Endothelial cell of umbilical vein (primary cell): ENCODE measurements at regions of chr20 and their contacts with region 1.

Region 1: DNA sequence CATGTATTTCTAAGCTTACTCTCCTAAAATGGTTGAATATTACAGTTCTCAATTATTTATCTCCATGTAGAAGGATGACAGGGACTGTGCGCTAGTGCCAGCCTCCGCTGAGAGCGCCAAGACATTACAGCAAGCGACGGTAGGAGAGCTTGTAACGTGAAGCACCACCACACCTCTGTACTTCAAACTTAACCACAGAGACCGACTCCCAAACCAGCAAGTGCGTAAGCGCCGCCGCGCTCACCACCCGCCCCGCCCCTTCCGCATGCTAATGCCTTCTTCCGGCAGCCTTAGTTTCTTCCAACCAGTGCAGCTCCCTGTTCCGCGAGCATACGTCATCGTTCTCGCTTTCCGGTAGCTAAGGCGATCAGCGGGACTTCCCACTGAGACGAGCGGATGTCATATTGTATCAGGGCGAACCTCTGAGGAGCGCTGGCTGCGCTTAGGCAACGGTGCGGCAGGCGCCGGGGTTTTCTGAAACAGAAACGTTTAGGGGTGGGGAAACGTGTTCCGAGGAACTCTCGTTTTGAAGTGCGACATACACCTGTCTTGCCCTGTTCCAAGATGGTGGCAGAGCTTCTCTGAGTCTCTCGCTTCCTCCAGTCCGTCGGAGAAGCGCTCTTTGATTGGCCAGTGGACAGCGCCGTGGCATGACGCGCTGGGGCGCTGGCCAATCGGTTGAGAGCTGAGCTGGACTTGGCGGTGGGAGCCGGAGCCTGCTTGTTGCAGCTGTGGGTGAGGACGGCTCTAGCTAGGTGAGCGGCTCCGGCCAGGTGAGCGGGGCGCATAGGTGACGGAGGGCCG is at the start of gene SEC23B:
- DNase-seq: peak; percentile 98
- H3K4me3 ChIP-seq: peak within 1 kb of the TSS; percentile 65 to 94 (median 75)
- H3K27ac ChIP-seq: peak within 1 kb of the TSS; percentile 82
- H3K4me1 ChIP-seq: peaks cover 9% of the 10 kb centered on the region
- H3K27me3 ChIP-seq: peaks cover 0 to 5% of the 10 kb centered on the region in 2 experiments
- CTCF ChIP-seq: no peak
- POLR2A ChIP-seq: peak; percentile 87
- total RNA-seq, gene SEC23B: 38.0 and 42.5 TPM in 2 replicates

Region 2: GRCh38 chr20:18287915-18288748 is 219.3 kb before region 1 on chr20 and contains the start of gene ZNF133:
- CTCF ChIA-PET with region 1: no interaction called
- POLR2A ChIA-PET with region 1: no interaction called
- dilution Hi-C with region 1: no loop called
- intact Hi-C with region 1: loop called (anchors 1 kb)
- DNase-seq: peak; percentile 96
- H3K4me3 ChIP-seq: peak within 1 kb of the TSS; percentile 72 to 92 (median 79)
- H3K27ac ChIP-seq: peak within 1 kb of the TSS; percentile 92
- H3K4me1 ChIP-seq: peaks cover 7% of the 10 kb centered on the region
- H3K27me3 ChIP-seq: peaks cover 0 to 8% of the 10 kb centered on the region in 2 experiments
- CTCF ChIP-seq: peak in 1 of 2 donors; percentile 7
- POLR2A ChIP-seq: peak; percentile 90
- total RNA-seq, gene ZNF133: 11.1 and 12.2 TPM in 2 replicates

Region 3: GRCh38 chr20:18466894-18467730 is 40.3 kb before region 1 on chr20 and contains the starts of genes DZANK1 and POLR3F:
- CTCF ChIA-PET with region 1: interaction called, 3 read pairs
- POLR2A ChIA-PET with region 1: interaction called, 8 read pairs
- dilution Hi-C with region 1: no loop called
- intact Hi-C with region 1: loop called (anchors 1 kb)
- DNase-seq: peak; percentile 96
- H3K4me3 ChIP-seq: peak within 1 kb of the TSS; percentile 72 to 99 (median 99)
- H3K27ac ChIP-seq: peak within 1 kb of the TSS; percentile 93
- H3K4me1 ChIP-seq: peaks cover 13% of the 10 kb centered on the region
- H3K27me3 ChIP-seq: no peaks in the 10 kb centered on the region
- CTCF ChIP-seq: no peak
- POLR2A ChIP-seq: peak; percentile 34
- total RNA-seq, gene DZANK1: 1.8 and 3.0 TPM in 2 replicates
- total RNA-seq, gene POLR3F: 9.8 and 10.2 TPM in 2 replicates

Region 4: DNA sequence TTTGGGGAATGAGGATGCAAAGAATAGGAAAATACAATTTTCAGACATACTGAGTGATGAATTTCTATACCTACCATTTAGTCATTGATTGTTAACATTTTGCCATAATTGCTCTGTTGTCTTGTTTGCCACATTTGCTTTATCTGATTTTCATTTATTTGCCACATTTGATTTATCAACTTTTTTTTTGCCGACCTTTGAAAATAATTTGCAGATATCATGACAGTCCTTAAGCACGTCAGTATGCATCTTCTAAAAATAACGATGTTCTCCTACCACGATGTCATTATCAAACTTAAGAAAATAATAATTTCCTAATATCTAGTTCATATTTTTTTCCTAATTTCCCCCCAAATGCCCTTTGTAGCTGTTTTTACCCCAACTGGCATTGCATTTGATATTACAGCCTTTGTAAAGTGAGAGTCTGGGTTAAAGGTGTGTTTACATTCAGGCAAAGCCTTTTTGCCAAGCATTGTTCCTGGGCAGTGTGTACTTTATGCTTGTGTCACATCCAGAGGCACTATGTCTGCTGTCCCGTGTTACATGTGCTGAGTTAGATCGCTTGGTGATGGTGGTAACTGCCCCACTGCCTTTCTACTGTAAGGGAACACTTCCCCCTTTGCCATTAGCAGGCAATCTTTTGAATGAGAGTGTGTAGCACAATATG is 26.7 kb after region 1 on chr20:
- CTCF ChIA-PET with region 1: no interaction called
- POLR2A ChIA-PET with region 1: no interaction called
- dilution Hi-C with region 1: no loop called
- intact Hi-C with region 1: loop called (anchors 1 kb)
- DNase-seq: no peak
- H3K4me3 ChIP-seq: no peak overlapping the region
- H3K27ac ChIP-seq: no peak overlapping the region
- H3K4me1 ChIP-seq: no peaks in the 10 kb centered on the region
- H3K27me3 ChIP-seq: no peaks in the 10 kb centered on the region
- CTCF ChIP-seq: no peak
- POLR2A ChIP-seq: no peak

Region 5: GRCh38 chr20:18587665-18588573 is 80.5 kb after region 1 on chr20 and contains the start of gene DTD1:
- CTCF ChIA-PET with region 1: interaction called, 4 read pairs
- POLR2A ChIA-PET with region 1: no interaction called
- dilution Hi-C with region 1: no loop called
- intact Hi-C with region 1: loop called (anchors 1 kb)
- DNase-seq: peak; percentile 85
- H3K4me3 ChIP-seq: peak within 1 kb of the TSS; percentile 65 to 83 (median 82)
- H3K27ac ChIP-seq: peak within 1 kb of the TSS; percentile 6
- H3K4me1 ChIP-seq: peaks cover 9% of the 10 kb centered on the region
- H3K27me3 ChIP-seq: peaks cover 4% of the 10 kb centered on the region in 2 experiments
- CTCF ChIP-seq: peak; percentile 70 to 78
- POLR2A ChIP-seq: peak; percentile 64
- total RNA-seq, gene DTD1: 50.8 and 62.9 TPM in 2 replicates